ENCODE measurements at regions of chr2 and their contacts with region 1.

Region 1: DNA sequence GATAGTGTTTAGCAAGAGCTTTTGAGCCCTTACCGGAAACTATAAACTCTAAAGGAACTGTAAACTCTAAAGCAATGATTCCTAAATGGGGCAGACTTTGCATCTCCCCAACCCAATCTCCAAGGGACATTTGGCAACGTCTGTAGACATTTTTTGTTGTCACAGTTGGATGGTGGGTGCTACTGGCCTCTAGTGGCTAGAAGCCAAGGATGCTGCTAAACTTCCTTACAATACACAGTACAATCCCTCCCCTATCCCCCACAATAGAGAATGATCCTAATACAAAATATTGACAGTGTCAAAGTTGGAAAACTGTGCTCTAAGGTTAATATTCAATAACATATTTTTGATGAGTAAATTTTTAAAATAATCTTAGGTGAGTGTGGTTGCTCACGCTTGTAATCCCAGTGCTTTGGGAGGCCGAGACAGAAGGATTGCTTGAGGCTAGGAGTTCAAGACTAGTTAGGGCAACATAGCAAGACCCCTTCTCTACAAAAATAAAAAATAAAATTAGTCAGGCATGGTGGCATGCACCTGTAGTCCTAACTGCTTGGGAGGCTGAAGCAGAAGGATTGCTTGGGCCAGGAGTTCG is 66.7 kb downstream of the PTPN4 start:
- DNase-seq: no peak
- ATAC-seq: peak in 3 of 4 donors; percentile 62 to 70 (median 64)
- H3K4me3 ChIP-seq: no peak overlapping the region
- H3K27ac ChIP-seq: no peak overlapping the region
- H3K4me1 ChIP-seq: peaks cover 0 to 14% (median 5%) of the 10 kb centered on the region in 12 donors
- H3K27me3 ChIP-seq: no peaks in the 10 kb centered on the region
- CTCF ChIP-seq: peak; percentile 40 to 66 (median 52)
- POLR2A ChIP-seq: no peak

Region 2: DNA sequence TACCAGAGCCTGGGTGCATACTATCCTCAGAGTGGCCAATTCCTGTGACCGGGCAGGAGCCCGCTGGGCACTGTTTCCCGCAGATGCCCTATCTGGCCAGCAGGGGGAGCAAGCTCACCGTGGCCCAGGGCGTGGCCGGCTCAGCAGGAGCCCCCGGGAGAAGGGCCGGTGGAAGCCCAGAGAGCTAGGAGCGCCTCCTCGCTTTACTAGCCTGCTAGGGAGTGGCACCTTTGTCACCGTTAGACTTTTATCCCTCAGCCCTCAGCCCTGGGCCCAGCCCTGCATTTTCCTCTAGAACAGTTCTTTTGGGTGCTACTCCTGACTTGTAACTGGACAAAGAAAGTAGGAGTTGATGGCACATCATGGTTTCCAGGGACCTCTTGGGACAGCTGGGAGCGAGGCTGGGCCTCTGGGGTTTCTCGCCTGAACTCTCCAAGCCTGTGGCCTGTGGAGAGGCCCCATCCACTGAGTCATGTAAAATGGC is 123.5 kb before region 1 on chr2:
- intact Hi-C with region 1: loop called in 6 of 10 experiments (anchors 2 to 5 kb)
- DNase-seq: peak; percentile 64 to 86 (median 66)
- ATAC-seq: peak; percentile 79 to 91 (median 90)
- H3K4me3 ChIP-seq: no peak overlapping the region
- H3K27ac ChIP-seq: no peak overlapping the region
- H3K4me1 ChIP-seq: peaks cover 0 to 25% (median 3%) of the 10 kb centered on the region in 12 donors
- H3K27me3 ChIP-seq: no peaks in the 10 kb centered on the region
- CTCF ChIP-seq: peak; percentile 85 to 96 (median 92)
- POLR2A ChIP-seq: no peak

Region 3: DNA sequence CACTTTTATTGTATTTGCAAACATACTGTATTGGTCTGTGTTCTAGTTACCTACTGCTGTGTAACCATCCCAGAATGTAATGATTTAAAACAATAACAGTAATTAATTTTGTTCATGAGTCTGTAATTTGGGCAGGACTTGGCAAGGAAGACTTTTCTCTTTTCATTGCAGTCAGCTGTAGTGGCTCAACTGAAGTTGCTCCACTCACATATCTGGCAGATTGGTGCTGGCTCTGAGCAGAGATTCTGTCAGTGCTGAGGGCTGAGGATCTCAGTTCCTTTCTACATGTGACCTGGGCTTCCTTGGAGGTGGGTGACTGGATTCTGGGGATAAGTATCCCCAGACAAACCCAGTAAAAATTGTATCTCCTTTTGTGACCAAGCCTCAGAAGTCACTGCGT is 40.2 kb before region 1 on chr2:
- intact Hi-C with region 1: no loop called
- DNase-seq: peak in 1 of 5 donors; percentile 37
- ATAC-seq: peak in 3 of 4 donors; percentile 54 to 80 (median 71)
- H3K4me3 ChIP-seq: no peak overlapping the region
- H3K27ac ChIP-seq: no peak overlapping the region
- H3K4me1 ChIP-seq: peaks cover 0 to 16% (median 3%) of the 10 kb centered on the region in 12 donors
- H3K27me3 ChIP-seq: no peaks in the 10 kb centered on the region
- CTCF ChIP-seq: no peak
- POLR2A ChIP-seq: no peak